PC-3 (cell line): ENCODE measurements at regions of chr12 and their contacts with region 1.

Region 1: DNA sequence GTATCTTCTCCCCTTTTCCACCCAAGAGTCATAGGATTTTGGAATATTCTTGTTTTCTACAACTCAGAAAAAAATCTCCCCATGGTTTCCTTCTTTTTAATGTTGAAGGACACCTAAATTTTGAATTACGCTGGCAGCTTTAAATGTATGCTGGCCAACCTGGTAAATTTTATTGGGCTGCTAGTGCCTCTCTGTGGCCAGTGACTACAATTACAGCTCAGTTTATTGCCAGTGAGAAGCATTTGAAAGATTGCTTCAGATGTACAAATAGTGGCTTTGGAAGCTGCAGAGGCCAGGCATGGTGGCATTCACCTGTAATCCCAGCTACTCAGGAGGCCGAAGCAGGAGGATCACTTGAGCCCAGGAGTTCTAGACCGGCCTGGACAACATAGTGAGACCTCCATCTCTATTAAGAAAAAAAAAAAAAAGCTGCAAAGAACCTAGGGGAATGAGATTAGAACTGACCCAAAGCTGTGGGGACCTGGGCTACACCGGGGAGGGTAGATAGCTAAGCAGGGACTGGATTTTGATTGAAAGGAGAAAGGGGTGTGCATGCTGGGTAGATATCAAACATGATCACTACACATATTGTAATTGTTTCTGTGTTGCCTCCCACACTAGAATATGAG is 7.6 kb upstream of the RAB21 start:
- DNase-seq: peak; percentile 77
- ATAC-seq: peak; percentile 88
- H3K4me3 ChIP-seq: no peak overlapping the region
- H3K27ac ChIP-seq: no peak overlapping the region
- H3K4me1 ChIP-seq: no peaks in the 10 kb centered on the region
- H3K27me3 ChIP-seq: 0 out of 2 replicates have a peak, but pooled peaks cover 8% of the 10 kb centered on the region
- CTCF ChIP-seq: peak; percentile 87

Region 2: DNA sequence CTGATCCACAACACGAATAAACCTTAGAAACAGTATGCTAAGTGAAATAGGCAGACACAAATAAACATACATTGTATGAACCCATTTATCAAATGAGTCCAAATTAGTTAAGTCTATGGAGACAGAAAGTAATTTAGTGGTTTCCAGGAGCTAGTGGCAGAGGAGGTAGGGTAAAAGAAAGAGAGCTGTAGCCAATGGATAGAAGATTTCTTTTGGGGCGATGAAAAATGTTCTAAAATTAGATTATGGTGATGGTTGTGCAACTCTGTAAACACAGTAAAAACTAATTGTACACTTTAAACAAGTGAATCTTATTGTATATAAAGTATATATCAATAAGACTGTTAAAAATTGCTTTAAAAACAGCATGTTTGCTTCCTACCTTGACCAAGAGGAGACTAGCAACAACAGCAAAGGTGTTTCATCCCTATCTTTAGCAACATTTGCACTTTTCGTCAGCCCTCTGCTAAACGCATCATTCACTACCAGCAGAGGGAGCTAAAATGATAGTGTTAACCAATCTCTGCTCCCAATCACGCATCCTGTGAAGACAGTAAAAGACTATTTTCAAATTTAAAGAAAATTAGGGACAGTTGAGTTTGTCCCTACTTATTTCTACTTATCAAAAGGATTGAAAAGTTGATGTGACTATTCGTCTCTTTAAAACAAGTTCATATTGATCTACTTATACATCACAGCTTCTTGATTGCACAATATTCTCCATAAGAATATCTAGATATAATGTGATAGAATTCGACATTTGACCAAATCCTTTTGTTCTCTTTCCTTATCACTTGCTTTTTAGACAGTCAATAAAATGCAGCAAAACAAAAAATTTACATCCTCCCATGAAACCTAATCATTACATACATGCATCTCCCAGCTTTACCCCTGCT is 331.5 kb before region 1 on chr12:
- CTCF ChIA-PET with region 1: interaction called, 3 read pairs
- POLR2A ChIA-PET with region 1: no interaction called
- intact Hi-C with region 1: loop called (anchors 2 kb)
- DNase-seq: peak; percentile 81
- ATAC-seq: peak; percentile 86
- H3K4me3 ChIP-seq: no peak overlapping the region
- H3K27ac ChIP-seq: no peak overlapping the region
- H3K4me1 ChIP-seq: no peaks in the 10 kb centered on the region
- H3K27me3 ChIP-seq: no peaks in the 10 kb centered on the region
- CTCF ChIP-seq: peak; percentile 91

Region 3: GRCh38 chr12:71636704-71637115 is 110.4 kb before region 1 on chr12:
- CTCF ChIA-PET with region 1: interaction called, 17 read pairs
- POLR2A ChIA-PET with region 1: no interaction called
- intact Hi-C with region 1: no loop called
- DNase-seq: peak; percentile 84
- ATAC-seq: peak; percentile 48; the same call in 1 of the 2 replicates
- H3K4me3 ChIP-seq: no peak overlapping the region
- H3K27ac ChIP-seq: no peak overlapping the region
- H3K4me1 ChIP-seq: no peaks in the 10 kb centered on the region
- H3K27me3 ChIP-seq: no peaks in the 10 kb centered on the region
- CTCF ChIP-seq: peak; percentile 87

Region 4: GRCh38 chr12:71648537-71648936 is 98.6 kb before region 1 on chr12:
- CTCF ChIA-PET with region 1: no interaction called
- POLR2A ChIA-PET with region 1: no interaction called
- intact Hi-C with region 1: loop called (anchors 2 kb)
- DNase-seq: peak; percentile 69
- ATAC-seq: peak; percentile 94
- H3K4me3 ChIP-seq: no peak overlapping the region
- H3K27ac ChIP-seq: peak overlapping the region; percentile 7; the same call in 1 of the 2 replicates
- H3K4me1 ChIP-seq: peaks cover 17% of the 10 kb centered on the region
- H3K27me3 ChIP-seq: no peaks in the 10 kb centered on the region
- CTCF ChIP-seq: no peak

Region 5: DNA sequence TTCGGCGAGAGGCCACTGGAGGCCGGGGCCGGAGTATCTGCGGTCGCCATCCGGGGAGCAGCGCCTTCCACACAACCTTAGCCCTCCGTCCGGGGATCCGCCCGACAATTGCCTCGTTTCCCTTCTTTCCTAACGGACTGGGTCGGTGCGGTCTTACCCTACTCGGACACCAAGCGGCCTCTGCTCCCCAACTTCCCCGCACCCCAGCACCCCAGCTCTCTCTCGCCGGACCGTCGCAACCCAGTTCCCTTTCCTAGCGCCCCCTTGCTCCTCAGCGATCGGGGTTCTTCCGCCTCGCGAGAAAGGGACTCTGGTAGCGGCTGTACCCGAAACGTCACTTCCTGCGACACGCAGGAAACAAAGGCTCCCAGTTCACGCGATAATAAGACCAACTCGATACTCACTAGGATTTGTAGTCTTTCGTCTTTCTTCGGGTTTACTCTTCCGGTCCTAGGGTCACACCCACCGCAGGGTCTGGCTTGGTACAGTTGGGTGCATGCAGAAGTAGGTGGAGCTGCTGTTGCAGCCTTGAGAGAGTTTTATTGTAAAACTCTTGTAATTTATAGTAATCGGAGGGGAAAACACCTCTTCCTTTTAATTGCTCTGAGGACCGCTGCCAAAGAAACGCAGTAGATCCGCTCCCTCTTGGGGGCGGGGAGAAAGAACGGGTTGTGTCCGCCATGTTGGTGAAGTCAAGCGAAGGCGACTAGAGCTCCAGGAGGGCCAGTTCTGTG is 83.4 kb before region 1 on chr12 and contains the start of gene ZFC3H1:
- CTCF ChIA-PET with region 1: interaction called, 6 read pairs
- POLR2A ChIA-PET with region 1: no interaction called
- intact Hi-C with region 1: loop called (anchors 1 kb)
- DNase-seq: peak; percentile 99
- ATAC-seq: peak; percentile 87
- H3K4me3 ChIP-seq: peak within 1 kb of the TSS; percentile 95
- H3K27ac ChIP-seq: peak within 1 kb of the TSS; percentile 87
- H3K4me1 ChIP-seq: peaks cover 18% of the 10 kb centered on the region
- H3K27me3 ChIP-seq: no peaks in the 10 kb centered on the region
- CTCF ChIP-seq: peak; percentile 48
- total RNA-seq, gene ZFC3H1: 13.7 and 18.5 TPM in 2 replicates

Region 6: GRCh38 chr12:71685914-71686665 is 61.0 kb before region 1 on chr12 and contains the start of gene TMEM19:
- CTCF ChIA-PET with region 1: interaction called, 24 read pairs
- POLR2A ChIA-PET with region 1: interaction called, 4 read pairs
- intact Hi-C with region 1: loop called (anchors 1 kb)
- DNase-seq: peak; percentile 91
- ATAC-seq: peak; percentile 94
- H3K4me3 ChIP-seq: peak within 1 kb of the TSS; percentile 69
- H3K27ac ChIP-seq: peak within 1 kb of the TSS; percentile 67
- H3K4me1 ChIP-seq: peaks cover 25% of the 10 kb centered on the region
- H3K27me3 ChIP-seq: no peaks in the 10 kb centered on the region
- CTCF ChIP-seq: peak; percentile 43
- total RNA-seq, gene TMEM19: 14.3 and 17.5 TPM in 2 replicates

Region 7: DNA sequence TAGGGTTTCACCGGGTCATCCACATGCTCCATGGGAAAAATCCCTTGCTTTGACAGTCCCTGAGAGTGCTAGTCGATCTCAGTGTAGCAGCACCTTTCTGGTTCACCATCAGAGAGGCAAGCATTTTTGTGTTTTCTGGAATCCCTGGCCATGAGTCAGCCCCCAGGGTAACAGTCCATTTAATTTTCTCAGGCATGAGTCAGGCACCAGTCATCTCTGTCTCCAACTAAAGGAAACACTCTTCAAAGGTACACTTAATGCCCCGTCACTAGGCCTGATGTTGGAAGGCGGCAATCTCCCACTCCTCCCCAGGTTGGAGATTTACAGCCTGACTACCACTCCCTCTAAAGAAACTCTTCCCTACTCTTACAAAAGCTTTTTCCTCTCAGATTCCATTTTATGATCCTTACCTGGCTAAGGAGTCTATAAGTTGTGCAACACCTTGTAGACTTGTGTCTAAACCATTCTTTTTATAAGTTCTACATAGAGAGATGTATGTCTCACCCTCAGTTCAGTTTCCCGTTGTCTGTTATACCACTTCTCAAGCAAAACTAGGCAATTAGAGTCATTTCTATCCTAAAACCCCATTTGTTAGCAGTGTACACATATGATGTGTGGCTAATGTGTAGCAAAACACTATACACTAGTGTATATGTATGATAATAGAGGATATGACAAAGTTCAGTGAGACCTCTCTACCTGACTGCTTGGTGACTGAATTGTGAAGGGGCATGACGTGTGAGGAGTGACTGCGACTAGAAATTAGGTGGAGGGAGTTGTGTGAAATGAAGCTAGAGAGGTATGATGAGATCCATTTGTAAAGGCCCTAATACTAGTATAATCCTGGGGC is 36.6 kb before region 1 on chr12:
- CTCF ChIA-PET with region 1: interaction called, 3 read pairs
- POLR2A ChIA-PET with region 1: no interaction called
- intact Hi-C with region 1: loop called (anchors 5 kb)
- DNase-seq: peak; percentile 96
- ATAC-seq: peak; percentile 98
- H3K4me3 ChIP-seq: peak overlapping the region; percentile 18
- H3K27ac ChIP-seq: peak overlapping the region; percentile 83
- H3K4me1 ChIP-seq: peaks cover 24% of the 10 kb centered on the region
- H3K27me3 ChIP-seq: no peaks in the 10 kb centered on the region
- CTCF ChIP-seq: no peak